Naive thymus-derived CD8-positive, alpha-beta T cell (primary cell): ENCODE measurements at regions of chr16 and their contacts with region 1.

Region 1: DNA sequence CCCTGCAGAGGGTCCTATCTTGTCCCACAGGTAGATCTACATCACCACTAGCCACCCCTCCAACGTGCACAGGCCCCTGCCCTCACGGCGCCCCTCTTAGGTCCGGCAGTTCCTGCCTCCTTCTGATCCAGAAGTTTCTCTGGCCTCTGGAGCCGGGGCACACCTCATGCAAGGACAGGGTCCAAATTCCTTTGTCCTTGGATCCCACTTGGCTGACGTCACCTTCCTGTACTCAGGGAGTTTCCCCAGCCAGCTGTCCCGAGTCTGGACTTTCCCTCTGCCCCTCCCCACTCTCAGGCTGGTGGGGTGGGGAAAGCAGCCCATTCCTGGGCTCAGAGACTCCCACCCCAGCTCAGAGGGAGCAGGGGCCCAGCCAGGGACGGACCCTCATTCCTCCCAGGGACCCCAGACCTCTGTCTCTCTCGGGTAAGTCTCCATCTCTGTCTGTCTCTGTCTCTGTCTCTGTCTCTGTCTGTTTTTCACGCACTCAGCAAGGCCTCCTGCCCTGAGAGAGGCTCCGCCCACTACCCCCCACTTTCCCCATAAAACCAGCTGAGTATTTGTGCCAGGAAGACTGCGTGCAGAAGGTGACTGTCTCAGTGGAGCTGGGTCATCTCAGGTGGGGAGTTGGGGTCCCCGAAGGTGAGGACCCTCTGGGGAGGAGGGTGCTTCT is at the start of gene IL32:
- DNase-seq: peak in 9 of 10 donors; percentile 38 to 73 (median 59)
- ATAC-seq: peak; percentile 55
- H3K4me3 Mint-ChIP-seq: peak within 1 kb of the TSS; percentile 97 to 100 (median 100)
- H3K27ac Mint-ChIP-seq: peak within 1 kb of the TSS; percentile 97 to 100 (median 98)
- H3K4me1 Mint-ChIP-seq: peaks cover 29 to 69% (median 63%) of the 10 kb centered on the region in 4 donors
- H3K27me3 Mint-ChIP-seq: no peaks in the 10 kb centered on the region
- polyA plus RNA-seq, gene IL32: 1,686 to 2,118 (median 1,952) TPM

Region 2: GRCh38 chr16:2936436-2937011 is 128.7 kb before region 1 on chr16:
- POLR2A ChIA-PET with region 1: no interaction called
- DNase-seq: peak in 1 of 10 donors; percentile 61
- ATAC-seq: no peak
- H3K4me3 Mint-ChIP-seq: no peak overlapping the region
- H3K27ac Mint-ChIP-seq: no peak overlapping the region
- H3K4me1 Mint-ChIP-seq: peaks cover 0 to 8% (median 5%) of the 10 kb centered on the region in 4 donors
- H3K27me3 Mint-ChIP-seq: no peaks in the 10 kb centered on the region

Region 3: GRCh38 chr16:3045357-3045728 is 19.9 kb before region 1 on chr16:
- POLR2A ChIA-PET with region 1: interaction called, 23 read pairs
- DNase-seq: peak in 2 of 10 donors; percentile 52 to 55
- ATAC-seq: peak; percentile 70 to 76
- H3K4me3 Mint-ChIP-seq: peak overlapping the region; percentile 71 to 87 (median 78)
- H3K27ac Mint-ChIP-seq: peak overlapping the region in 3 of 10 donors; percentile 52 to 63 (median 63)
- H3K4me1 Mint-ChIP-seq: peaks cover 12 to 27% (median 25%) of the 10 kb centered on the region in 4 donors
- H3K27me3 Mint-ChIP-seq: peaks cover 0 to 34% (median 25%) of the 10 kb centered on the region in 5 donors

Region 4: DNA sequence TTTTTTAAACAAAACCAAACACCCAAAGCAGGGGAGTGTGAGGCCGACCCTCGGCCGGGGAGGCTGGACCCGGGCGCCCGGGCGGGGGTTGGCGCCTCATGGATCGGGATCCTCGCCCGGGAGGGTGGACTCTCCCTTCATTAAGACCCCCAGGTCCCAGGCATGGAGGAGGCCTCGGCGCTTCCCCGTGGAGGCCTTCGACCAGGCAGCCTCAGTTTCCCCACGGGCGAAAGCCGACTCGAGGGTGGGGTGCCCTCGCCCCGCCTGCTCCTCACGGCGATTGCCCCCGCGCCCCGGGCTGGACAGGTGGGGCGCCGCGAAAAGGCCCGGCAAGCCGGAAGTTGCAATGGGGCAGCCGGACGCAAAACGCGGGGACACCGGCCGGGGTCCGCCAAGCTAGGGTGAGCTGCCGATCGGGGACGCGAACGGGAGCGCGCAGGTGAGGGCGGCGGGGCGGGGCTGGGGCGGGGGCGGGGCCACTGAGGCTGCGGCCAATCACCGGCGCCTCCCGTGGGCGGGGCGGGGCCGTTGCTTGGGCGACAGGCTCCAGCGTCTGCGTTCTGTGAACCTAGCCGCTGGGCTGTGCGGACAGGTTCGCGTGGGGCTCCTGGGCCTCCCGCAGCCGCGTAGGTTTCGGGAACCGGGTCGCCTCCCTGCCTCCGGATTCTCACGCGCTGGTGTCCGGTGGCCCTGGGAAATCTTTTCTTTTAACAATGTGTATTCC is 41.2 kb after region 1 on chr16:
- POLR2A ChIA-PET with region 1: interaction called, 261 read pairs
- DNase-seq: peak; percentile 82 to 95 (median 88)
- ATAC-seq: peak; percentile 90 to 95
- H3K4me3 Mint-ChIP-seq: peak overlapping the region; percentile 78 to 93 (median 89)
- H3K27ac Mint-ChIP-seq: peak overlapping the region; percentile 81 to 96 (median 90)
- H3K4me1 Mint-ChIP-seq: peaks cover 15 to 41% (median 34%) of the 10 kb centered on the region in 4 donors
- H3K27me3 Mint-ChIP-seq: no peaks in the 10 kb centered on the region